HCT116 (cell line): ENCODE measurements at regions of chr12 and their contacts with region 1.

Region 1: GRCh38 chr12:6470375-6471163 is at the start of gene VAMP1:
- DNase-seq: peak; percentile 94
- ATAC-seq: peak; percentile 94
- H3K4me3 ChIP-seq: peak within 1 kb of the TSS; percentile 62 to 88
- H3K27ac ChIP-seq: peak within 1 kb of the TSS; percentile 72
- H3K4me1 ChIP-seq: peaks cover 11 to 27% of the 10 kb centered on the region in 2 experiments
- H3K27me3 ChIP-seq: no peaks in the 10 kb centered on the region
- CTCF ChIP-seq: no peak
- POLR2A ChIP-seq: peak; percentile 99
- RAD21 ChIP-seq: no peak
- total RNA-seq, gene VAMP1: 12.1 TPM

Region 2: DNA sequence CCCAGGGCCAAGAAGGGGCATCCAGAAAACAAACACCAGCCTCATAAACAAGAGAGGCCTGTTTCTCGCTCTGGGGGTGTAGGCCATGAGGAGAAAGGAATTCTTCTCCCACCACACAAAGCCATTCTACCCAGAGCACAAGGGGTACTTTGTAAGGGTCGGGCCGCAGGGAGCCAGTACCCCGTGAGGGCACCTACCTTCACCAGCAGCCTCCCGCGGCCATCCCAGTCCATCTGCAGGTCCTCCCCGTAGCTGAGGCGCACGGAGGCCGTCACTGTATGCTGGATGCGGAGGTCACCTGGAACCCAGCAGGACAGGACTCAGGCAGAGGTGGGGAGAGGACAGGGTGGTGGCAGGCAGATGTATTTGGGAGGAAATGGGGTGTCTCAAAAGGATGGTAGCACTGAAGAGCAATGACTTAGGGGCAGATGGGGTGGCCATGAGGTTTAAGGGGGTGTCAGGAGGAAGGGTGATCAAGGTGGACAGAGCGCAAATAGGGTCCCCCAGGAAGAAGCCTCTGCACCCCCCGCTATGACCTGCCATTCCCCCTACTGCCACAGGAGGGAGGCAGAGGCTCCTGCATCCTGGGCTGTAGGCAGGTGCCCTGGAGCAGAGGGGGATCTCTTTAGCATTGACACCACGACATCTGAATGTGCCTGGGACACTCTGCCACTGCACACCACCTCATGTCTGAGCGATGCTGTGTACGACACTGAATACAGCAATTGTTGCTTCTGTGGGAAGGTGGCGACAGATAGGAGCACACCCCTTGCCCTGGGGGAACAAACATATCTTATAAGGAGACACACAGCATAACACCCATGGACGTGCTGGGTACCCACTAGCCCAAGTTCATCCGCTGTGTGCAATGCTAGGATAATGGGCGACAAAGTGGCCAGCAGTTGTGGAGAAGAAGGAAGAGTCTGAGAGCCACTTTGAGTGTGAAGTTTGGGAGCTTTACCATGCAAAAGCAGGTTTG is 407.5 kb before region 1 on chr12:
- CTCF ChIA-PET with region 1: interaction called, 8 read pairs
- POLR2A ChIA-PET with region 1: no interaction called
- RAD21 ChIA-PET with region 1: no interaction called
- intact Hi-C with region 1: loop called (anchors 2 kb)
- DNase-seq: no peak
- ATAC-seq: peak; percentile 85
- H3K4me3 ChIP-seq: no peak overlapping the region
- H3K27ac ChIP-seq: no peak overlapping the region
- H3K4me1 ChIP-seq: peaks cover 0 to 21% of the 10 kb centered on the region in 2 experiments; a peak in 3 of 4 replicates
- H3K27me3 ChIP-seq: no peaks in the 10 kb centered on the region
- CTCF ChIP-seq: peak; percentile 90 to 98 (median 97)
- POLR2A ChIP-seq: no peak
- RAD21 ChIP-seq: peak; percentile 98

Region 3: DNA sequence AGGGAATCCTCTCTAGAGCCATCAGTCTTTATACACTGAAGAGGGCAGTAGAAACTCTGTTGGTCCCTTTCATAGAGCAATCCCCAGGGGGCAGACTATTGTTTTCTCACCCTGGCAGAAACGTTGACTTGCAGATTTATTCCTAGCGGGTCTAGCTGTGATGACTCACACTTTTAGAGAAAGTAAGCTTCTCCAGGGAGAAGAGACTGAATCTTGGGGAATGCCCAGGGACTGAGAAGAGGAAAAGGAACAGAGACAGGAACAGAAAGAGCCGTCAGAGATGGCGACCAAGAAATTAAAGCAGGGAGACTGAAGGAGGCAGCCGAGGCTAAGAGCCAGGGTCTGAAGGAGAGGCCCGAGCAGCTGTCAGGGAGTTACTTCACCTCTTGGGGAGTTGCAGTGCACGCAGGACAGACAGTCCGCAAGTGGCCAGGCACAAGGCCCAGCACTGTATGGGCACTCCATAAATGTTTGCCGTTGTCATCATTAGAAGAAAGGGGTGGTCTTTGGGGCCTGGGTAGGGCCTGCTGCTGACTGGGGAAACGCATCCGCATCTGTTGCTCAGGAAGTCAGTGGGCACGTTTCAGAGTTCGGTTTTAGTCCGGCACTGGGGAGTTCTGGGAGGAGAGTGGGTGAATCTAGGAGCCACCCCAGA is 147.1 kb before region 1 on chr12:
- CTCF ChIA-PET with region 1: interaction called, 28 read pairs
- POLR2A ChIA-PET with region 1: interaction called, 7 read pairs
- RAD21 ChIA-PET with region 1: interaction called in 1 of 2 experiments, 4 read pairs
- intact Hi-C with region 1: loop called (anchors 1 kb)
- DNase-seq: peak; percentile 70
- ATAC-seq: peak; percentile 80
- H3K4me3 ChIP-seq: no peak overlapping the region
- H3K27ac ChIP-seq: peak overlapping the region; percentile 71
- H3K4me1 ChIP-seq: peaks cover 12 to 37% of the 10 kb centered on the region in 2 experiments
- H3K27me3 ChIP-seq: no peaks in the 10 kb centered on the region
- CTCF ChIP-seq: peak; percentile 66 to 97 (median 70)
- POLR2A ChIP-seq: no peak
- RAD21 ChIP-seq: peak; percentile 68

Region 4: GRCh38 chr12:6335451-6336078 is 135.0 kb before region 1 on chr12:
- CTCF ChIA-PET with region 1: interaction called, 4 read pairs
- POLR2A ChIA-PET with region 1: interaction called, 14 read pairs
- RAD21 ChIA-PET with region 1: interaction called, 4 to 5 read pairs
- intact Hi-C with region 1: loop called (anchors 5 kb)
- DNase-seq: no peak
- ATAC-seq: peak; percentile 48
- H3K4me3 ChIP-seq: peak overlapping the region; percentile 32 to 64
- H3K27ac ChIP-seq: peak overlapping the region; percentile 99
- H3K4me1 ChIP-seq: peaks cover 55 to 78% of the 10 kb centered on the region in 2 experiments
- H3K27me3 ChIP-seq: no peaks in the 10 kb centered on the region
- CTCF ChIP-seq: peak in 2 of 3 experiments; percentile 50 to 61; a peak in 4 of 6 replicates
- POLR2A ChIP-seq: no peak
- RAD21 ChIP-seq: no peak

Region 5: DNA sequence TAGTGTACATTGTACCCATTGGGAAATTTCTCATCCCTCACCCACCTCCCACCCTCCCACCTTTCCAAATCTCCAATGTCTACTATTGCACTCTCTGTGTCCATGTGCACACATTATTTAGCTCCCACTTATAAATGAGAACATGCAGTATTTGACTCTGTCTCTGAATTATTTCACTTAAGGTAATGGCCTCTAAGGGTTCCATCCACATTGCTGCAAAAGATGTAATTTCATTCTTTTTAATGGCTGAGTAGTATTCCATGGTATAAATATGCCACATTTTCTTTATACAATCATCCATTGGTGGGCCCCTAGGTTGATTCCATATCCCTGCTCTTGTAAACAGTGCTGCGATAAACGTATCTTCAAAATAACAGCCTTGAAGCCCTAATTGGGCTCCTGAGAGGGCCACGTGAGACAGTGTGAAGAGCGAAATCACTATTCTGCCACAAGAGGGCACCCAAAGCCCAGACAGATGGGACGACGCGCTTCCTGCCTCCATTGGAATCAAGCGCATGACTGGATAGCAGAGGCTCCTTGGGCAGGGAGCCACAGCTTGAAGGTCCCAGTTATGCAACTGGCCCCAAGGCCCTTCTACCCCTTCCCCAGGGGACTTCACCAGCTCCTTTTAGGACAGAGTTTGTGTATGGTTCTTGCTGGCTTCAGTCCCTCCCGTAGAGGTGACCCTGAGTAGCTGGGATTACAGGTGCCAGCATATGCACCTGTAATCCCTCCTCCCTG is 47.1 kb before region 1 on chr12:
- CTCF ChIA-PET with region 1: interaction called, 46 read pairs
- POLR2A ChIA-PET with region 1: no interaction called
- RAD21 ChIA-PET with region 1: interaction called, 8 to 9 read pairs
- intact Hi-C with region 1: loop called (anchors 1 kb)
- DNase-seq: peak; percentile 84
- ATAC-seq: peak; percentile 97
- H3K4me3 ChIP-seq: no peak overlapping the region
- H3K27ac ChIP-seq: no peak overlapping the region
- H3K4me1 ChIP-seq: peaks cover 4 to 20% of the 10 kb centered on the region in 2 experiments; a peak in 3 of 4 replicates
- H3K27me3 ChIP-seq: no peaks in the 10 kb centered on the region
- CTCF ChIP-seq: peak; percentile 78 to 90 (median 90)
- POLR2A ChIP-seq: peak; percentile 31
- RAD21 ChIP-seq: peak; percentile 97

Region 6: GRCh38 chr12:6430124-6430989 is 40.2 kb before region 1 on chr12:
- CTCF ChIA-PET with region 1: interaction called, 46 read pairs
- POLR2A ChIA-PET with region 1: no interaction called
- RAD21 ChIA-PET with region 1: interaction called in 1 of 2 experiments, 13 read pairs
- intact Hi-C with region 1: loop called (anchors 2 kb)
- DNase-seq: peak; percentile 76
- ATAC-seq: peak; percentile 85
- H3K4me3 ChIP-seq: peak overlapping the region; percentile 24 to 29
- H3K27ac ChIP-seq: peak overlapping the region; percentile 76
- H3K4me1 ChIP-seq: peaks cover 21 to 33% of the 10 kb centered on the region in 2 experiments
- H3K27me3 ChIP-seq: no peaks in the 10 kb centered on the region
- CTCF ChIP-seq: no peak
- POLR2A ChIP-seq: no peak
- RAD21 ChIP-seq: no peak

Region 7: GRCh38 chr12:6493497-6494257 is 23.1 kb after region 1 on chr12 and contains the start of gene NCAPD2:
- CTCF ChIA-PET with region 1: no interaction called
- POLR2A ChIA-PET with region 1: interaction called, 12 read pairs
- RAD21 ChIA-PET with region 1: interaction called in 1 of 2 experiments, 3 read pairs
- intact Hi-C with region 1: no loop called
- DNase-seq: peak; percentile 91
- ATAC-seq: peak; percentile 90
- H3K4me3 ChIP-seq: peak within 1 kb of the TSS; percentile 86 to 90
- H3K27ac ChIP-seq: peak within 1 kb of the TSS; percentile 97
- H3K4me1 ChIP-seq: peaks cover 12 to 19% of the 10 kb centered on the region in 2 experiments
- H3K27me3 ChIP-seq: no peaks in the 10 kb centered on the region
- CTCF ChIP-seq: peak in 1 of 3 experiments; percentile 24; a peak in 2 of 6 replicates
- POLR2A ChIP-seq: peak; percentile 27
- RAD21 ChIP-seq: no peak
- total RNA-seq, gene NCAPD2: 177 TPM